Breast epithelium (tissue), 4 donors: ENCODE measurements at regions of chr5 and their contacts with region 1.

Region 1: GRCh38 chr5:126066836-126067235 is 356.4 kb upstream of the GRAMD2B start:
- DNase-seq: no peak
- H3K4me3 ChIP-seq: no peak overlapping the region
- H3K27ac ChIP-seq: no peak overlapping the region
- H3K4me1 ChIP-seq: no peaks in the 10 kb centered on the region
- H3K27me3 ChIP-seq: no peaks in the 10 kb centered on the region
- CTCF ChIP-seq: no peak
- POLR2A ChIP-seq: no peak

Region 2: DNA sequence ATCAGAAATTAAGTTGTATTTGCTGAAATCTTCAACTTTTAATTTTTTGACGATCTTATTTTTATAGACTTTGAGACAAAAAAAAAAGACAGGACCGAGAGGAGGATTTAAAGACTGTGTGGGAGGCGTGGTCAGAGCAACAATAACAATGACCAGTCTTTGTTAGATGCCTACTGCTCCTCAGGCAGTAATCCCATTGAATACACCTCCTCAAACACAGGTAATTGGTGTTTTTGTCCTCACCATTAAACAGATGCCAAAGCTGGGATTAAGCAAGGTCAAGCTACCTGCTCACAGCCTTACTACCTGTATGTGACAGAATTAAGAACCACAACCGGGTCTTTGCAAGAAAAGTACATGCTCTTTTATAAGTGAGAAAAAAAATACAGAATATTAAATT is 123.0 kb after region 1 on chr5:
- intact Hi-C with region 1: loop called (anchors 5 kb)
- DNase-seq: no peak
- H3K4me3 ChIP-seq: no peak overlapping the region
- H3K27ac ChIP-seq: no peak overlapping the region
- H3K4me1 ChIP-seq: no peaks in the 10 kb centered on the region
- H3K27me3 ChIP-seq: no peaks in the 10 kb centered on the region
- CTCF ChIP-seq: no peak
- POLR2A ChIP-seq: no peak